CD4-positive, alpha-beta T cell (primary cell): ENCODE measurements at regions of chr3 and their contacts with region 1.

Region 1: GRCh38 chr3:10224784-10225665 is 23.2 kb upstream of the TATDN2 start:
- DNase-seq: peak; percentile 38 to 83 (median 54)
- ATAC-seq: peak; percentile 67
- H3K4me3 ChIP-seq: no peak overlapping the region
- H3K4me3 Mint-ChIP-seq: peak overlapping the region; percentile 35
- H3K27ac ChIP-seq: peak overlapping the region in 1 of 2 donors; percentile 52
- H3K27ac Mint-ChIP-seq: peak overlapping the region; percentile 81
- H3K4me1 ChIP-seq: peaks cover 72% of the 10 kb centered on the region
- H3K4me1 Mint-ChIP-seq: peaks cover 55% of the 10 kb centered on the region
- H3K27me3 ChIP-seq: no peaks in the 10 kb centered on the region
- H3K27me3 Mint-ChIP-seq: no peaks in the 10 kb centered on the region
- CTCF ChIP-seq: peak; percentile 72

Region 2: DNA sequence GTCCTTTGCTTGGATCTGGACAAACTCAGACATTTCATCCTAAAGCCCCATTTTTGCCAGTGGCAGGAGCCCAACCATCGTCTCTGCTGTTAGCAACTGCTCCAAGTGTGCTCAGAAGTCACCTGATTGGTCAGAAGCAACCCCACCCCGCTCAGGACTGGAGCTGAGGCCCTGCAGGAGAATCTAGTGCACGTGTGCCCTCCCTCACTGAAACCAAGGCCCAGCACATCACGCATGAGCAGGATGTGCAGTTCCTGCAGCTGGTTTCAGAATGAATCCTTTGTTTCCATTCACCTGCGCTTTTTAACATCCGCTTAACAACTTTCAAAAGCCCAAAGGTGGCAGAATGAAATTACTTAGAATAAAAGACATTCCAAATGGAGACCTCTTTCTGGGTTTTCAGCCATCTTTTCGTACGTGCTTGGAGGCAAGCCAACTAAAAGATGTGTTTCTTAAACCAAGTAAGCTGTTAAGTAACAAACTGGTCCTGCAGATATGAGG is 1056.7 kb before region 1 on chr3:
- CTCF ChIA-PET with region 1: no interaction called
- POLR2A ChIA-PET with region 1: no interaction called
- intact Hi-C with region 1: no loop called
- DNase-seq: peak in 6 of 14 experiments; percentile 12 to 54 (median 34)
- ATAC-seq: peak; percentile 60
- H3K4me3 ChIP-seq: no peak overlapping the region
- H3K4me3 Mint-ChIP-seq: peak overlapping the region; percentile 34
- H3K27ac ChIP-seq: no peak overlapping the region
- H3K27ac Mint-ChIP-seq: no peak overlapping the region
- H3K4me1 ChIP-seq: peaks cover 43% of the 10 kb centered on the region
- H3K4me1 Mint-ChIP-seq: peaks cover 49% of the 10 kb centered on the region
- H3K27me3 ChIP-seq: no peaks in the 10 kb centered on the region
- H3K27me3 Mint-ChIP-seq: no peaks in the 10 kb centered on the region
- CTCF ChIP-seq: no peak

Region 3: GRCh38 chr3:10026084-10026890 is 198.7 kb before region 1 on chr3 and contains the start of gene FANCD2:
- CTCF ChIA-PET with region 1: no interaction called
- POLR2A ChIA-PET with region 1: no interaction called
- intact Hi-C with region 1: loop called in 1 of 2 experiments (anchors 5 kb)
- DNase-seq: peak; percentile 82 to 97 (median 91)
- ATAC-seq: peak; percentile 91
- H3K4me3 ChIP-seq: peak within 1 kb of the TSS; percentile 87
- H3K4me3 Mint-ChIP-seq: peak within 1 kb of the TSS; percentile 98
- H3K27ac ChIP-seq: peak within 1 kb of the TSS; percentile 70 to 84
- H3K27ac Mint-ChIP-seq: peak within 1 kb of the TSS; percentile 98
- H3K4me1 ChIP-seq: peaks cover 33% of the 10 kb centered on the region
- H3K4me1 Mint-ChIP-seq: peaks cover 35% of the 10 kb centered on the region
- H3K27me3 ChIP-seq: no peaks in the 10 kb centered on the region
- H3K27me3 Mint-ChIP-seq: no peaks in the 10 kb centered on the region
- CTCF ChIP-seq: no peak
- total RNA-seq, gene FANCD2: 13.8 to 16.8 TPM

Region 4: DNA sequence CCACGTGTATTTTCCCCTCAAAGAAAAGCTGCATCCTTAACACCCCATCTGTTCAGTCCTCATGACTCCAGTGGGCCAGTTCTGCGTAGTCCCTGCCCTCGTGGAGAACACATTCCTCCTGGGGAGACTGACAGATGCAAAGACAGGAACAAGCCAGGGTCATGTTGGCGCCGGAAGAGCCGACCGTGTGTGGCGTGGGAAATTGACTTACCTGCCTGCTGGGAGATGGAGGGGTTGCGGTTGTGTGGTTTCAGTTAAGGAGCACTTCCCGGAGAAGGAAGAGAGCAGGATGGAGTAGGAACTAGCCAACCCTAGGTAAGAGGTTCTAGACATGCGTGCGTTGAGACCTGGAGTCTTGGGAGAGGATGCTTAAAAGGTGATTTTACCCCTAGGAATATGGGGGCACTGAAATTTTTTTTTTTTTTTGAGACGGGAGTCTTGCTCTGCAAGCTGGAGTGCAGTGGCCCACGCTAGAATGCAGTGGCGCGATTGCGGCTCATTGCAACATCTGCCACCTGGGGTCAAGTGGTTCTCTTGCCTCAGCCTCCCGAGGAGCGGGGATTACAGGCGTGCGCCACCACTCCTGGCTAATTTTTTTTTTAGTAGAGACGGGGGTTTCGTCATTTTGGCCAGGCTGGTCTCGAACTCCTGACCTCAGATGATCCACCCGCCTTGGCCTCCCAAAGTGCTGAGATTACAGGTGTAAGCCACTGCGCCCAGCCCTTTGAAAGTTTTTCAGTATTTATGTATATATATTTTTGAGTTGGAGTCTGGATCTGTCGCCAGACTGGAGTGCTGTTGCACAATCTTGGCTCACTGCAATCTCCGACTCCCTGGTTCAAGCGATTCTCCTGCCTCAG is 82.1 kb before region 1 on chr3:
- CTCF ChIA-PET with region 1: no interaction called
- POLR2A ChIA-PET with region 1: interaction called, 6 read pairs
- intact Hi-C with region 1: loop called in 1 of 2 experiments (anchors 5 kb)
- DNase-seq: peak in 5 of 14 experiments; percentile 1 to 54 (median 42)
- ATAC-seq: no peak
- H3K4me3 ChIP-seq: peak overlapping the region; percentile 85
- H3K4me3 Mint-ChIP-seq: peak overlapping the region; percentile 90
- H3K27ac ChIP-seq: peak overlapping the region in 1 of 2 donors; percentile 22
- H3K27ac Mint-ChIP-seq: peak overlapping the region; percentile 85
- H3K4me1 ChIP-seq: peaks cover 54% of the 10 kb centered on the region
- H3K4me1 Mint-ChIP-seq: peaks cover 40% of the 10 kb centered on the region
- H3K27me3 ChIP-seq: no peaks in the 10 kb centered on the region
- H3K27me3 Mint-ChIP-seq: no peaks in the 10 kb centered on the region
- CTCF ChIP-seq: no peak

Region 5: DNA sequence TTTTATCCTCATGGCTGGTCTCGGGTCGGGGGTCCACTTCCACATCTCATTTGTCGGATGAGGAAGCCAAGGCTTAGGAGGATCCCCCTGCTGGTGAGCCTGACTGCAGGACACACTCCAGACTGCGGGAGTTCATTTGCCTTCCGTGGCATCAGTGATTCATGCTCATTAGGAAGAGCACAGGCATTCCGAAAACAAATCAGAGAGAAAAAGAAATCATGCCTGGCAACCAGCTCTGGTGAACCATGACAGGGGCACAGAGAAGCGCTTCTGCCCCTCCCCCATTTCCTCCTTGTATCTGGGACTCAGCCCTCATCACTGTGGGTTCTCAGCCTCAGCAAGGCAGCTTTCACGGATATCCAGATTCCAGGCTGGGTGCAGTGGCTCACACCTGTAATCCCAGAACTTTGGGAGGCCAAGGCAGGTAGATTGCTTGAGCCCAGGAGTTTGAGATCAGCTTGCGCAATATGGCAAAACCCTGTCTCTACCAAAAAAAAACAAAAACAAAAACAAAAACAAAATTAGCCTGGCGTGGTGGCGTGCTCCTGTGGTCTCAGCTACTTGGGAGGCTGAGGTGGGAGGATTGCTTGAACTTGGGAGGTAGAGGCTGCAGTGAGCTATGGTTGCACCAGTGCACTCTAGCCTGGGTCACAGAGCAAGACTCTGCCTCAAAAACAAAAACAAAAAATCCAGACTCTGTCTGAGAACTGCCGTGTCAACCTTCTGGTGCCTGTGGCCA is 31.9 kb before region 1 on chr3:
- CTCF ChIA-PET with region 1: interaction called, 5 read pairs
- POLR2A ChIA-PET with region 1: interaction called, 28 read pairs
- intact Hi-C with region 1: loop called in 1 of 2 experiments (anchors 2 kb)
- DNase-seq: peak in 13 of 14 experiments; percentile 33 to 83 (median 62)
- ATAC-seq: peak; percentile 51
- H3K4me3 ChIP-seq: peak overlapping the region; percentile 7
- H3K4me3 Mint-ChIP-seq: peak overlapping the region; percentile 86
- H3K27ac ChIP-seq: peak overlapping the region; percentile 89 to 90
- H3K27ac Mint-ChIP-seq: peak overlapping the region; percentile 96
- H3K4me1 ChIP-seq: peaks cover 96% of the 10 kb centered on the region
- H3K4me1 Mint-ChIP-seq: peaks cover 81% of the 10 kb centered on the region
- H3K27me3 ChIP-seq: no peaks in the 10 kb centered on the region
- H3K27me3 Mint-ChIP-seq: no peaks in the 10 kb centered on the region
- CTCF ChIP-seq: no peak

Region 6: GRCh38 chr3:10242182-10243065 is 17.4 kb after region 1 on chr3:
- CTCF ChIA-PET with region 1: interaction called, 5 read pairs
- POLR2A ChIA-PET with region 1: interaction called, 7 read pairs
- intact Hi-C with region 1: loop called in 1 of 2 experiments (anchors 2 kb)
- DNase-seq: peak; percentile 42 to 94 (median 68)
- ATAC-seq: peak; percentile 94
- H3K4me3 ChIP-seq: peak overlapping the region; percentile 6
- H3K4me3 Mint-ChIP-seq: peak overlapping the region; percentile 77
- H3K27ac ChIP-seq: peak overlapping the region; percentile 41 to 63
- H3K27ac Mint-ChIP-seq: peak overlapping the region; percentile 91
- H3K4me1 ChIP-seq: peaks cover 59% of the 10 kb centered on the region
- H3K4me1 Mint-ChIP-seq: peaks cover 62% of the 10 kb centered on the region
- H3K27me3 ChIP-seq: no peaks in the 10 kb centered on the region
- H3K27me3 Mint-ChIP-seq: no peaks in the 10 kb centered on the region
- CTCF ChIP-seq: no peak

Region 7: DNA sequence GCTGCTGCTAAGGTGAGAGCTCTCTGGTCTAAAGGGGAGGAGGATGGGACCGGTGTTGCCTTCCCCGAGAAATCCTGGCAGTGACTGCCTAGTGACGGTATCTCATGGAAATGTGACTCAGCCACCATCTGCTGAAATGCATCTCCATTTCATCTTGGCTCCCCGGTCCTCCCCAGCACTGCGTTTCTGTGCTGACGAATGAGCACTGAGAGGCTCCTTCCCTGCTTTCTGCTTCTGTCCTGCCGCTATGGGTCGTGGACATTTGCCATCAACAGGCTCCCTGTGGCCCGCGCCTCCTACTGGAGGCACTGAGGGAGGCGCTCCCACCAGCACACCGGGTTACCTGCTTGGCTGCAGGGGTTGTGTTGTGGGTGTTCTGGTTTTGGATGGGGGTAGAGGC is 109.4 kb after region 1 on chr3:
- CTCF ChIA-PET with region 1: no interaction called
- POLR2A ChIA-PET with region 1: no interaction called
- intact Hi-C with region 1: no loop called
- DNase-seq: no peak
- ATAC-seq: no peak
- H3K4me3 ChIP-seq: no peak overlapping the region
- H3K4me3 Mint-ChIP-seq: no peak overlapping the region
- H3K27ac ChIP-seq: no peak overlapping the region
- H3K27ac Mint-ChIP-seq: no peak overlapping the region
- H3K4me1 ChIP-seq: peaks cover 6% of the 10 kb centered on the region
- H3K4me1 Mint-ChIP-seq: no peaks in the 10 kb centered on the region
- H3K27me3 ChIP-seq: peaks cover 0 to 5% of the 10 kb centered on the region in 2 experiments
- H3K27me3 Mint-ChIP-seq: peaks cover 4% of the 10 kb centered on the region
- CTCF ChIP-seq: no peak